Aorta (tissue), 5 donors: ENCODE measurements at regions of chr2 and their contacts with region 1.

Region 1: DNA sequence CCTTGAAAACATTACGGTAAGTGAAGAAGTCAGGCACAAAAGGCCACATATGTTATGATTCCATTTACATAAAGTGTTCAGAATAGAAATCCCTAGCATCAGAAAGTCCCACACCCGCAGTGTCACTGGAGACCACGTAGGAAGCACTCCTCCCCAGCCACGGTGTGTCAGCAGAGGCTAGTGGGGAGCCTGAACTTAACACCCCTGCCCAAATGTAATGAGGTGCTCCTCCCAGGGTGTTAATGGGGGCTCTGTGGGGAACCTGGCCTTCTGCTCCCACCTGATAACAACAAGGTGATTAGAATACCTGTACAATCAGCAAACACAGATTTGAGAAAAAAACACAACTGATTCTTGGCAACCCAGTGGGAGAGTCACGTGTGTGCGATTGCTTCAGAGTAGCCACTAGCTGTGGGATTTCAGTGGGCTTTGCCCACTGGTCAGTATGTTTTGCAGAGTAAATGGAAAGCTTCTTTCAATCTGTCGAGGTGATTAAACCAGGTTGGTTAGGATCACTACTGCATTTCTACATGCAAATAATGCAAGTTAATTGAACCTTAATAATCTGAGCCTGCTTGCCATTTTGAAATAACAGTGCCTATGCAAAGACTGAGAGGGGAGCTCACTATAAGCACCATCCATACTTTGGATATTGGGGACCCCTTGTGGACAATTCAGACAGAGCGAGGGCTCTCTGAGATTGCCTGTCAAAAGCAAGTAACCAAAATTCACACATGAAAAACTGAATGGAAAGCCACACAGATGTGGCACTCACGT is 20.6 kb upstream of the ATRAID start:
- DNase-seq: no peak
- ATAC-seq: peak; percentile 87
- H3K4me3 ChIP-seq: no peak overlapping the region
- H3K27ac ChIP-seq: no peak overlapping the region
- H3K4me1 ChIP-seq: no peaks in the 10 kb centered on the region
- H3K27me3 ChIP-seq: no peaks in the 10 kb centered on the region

Region 2: DNA sequence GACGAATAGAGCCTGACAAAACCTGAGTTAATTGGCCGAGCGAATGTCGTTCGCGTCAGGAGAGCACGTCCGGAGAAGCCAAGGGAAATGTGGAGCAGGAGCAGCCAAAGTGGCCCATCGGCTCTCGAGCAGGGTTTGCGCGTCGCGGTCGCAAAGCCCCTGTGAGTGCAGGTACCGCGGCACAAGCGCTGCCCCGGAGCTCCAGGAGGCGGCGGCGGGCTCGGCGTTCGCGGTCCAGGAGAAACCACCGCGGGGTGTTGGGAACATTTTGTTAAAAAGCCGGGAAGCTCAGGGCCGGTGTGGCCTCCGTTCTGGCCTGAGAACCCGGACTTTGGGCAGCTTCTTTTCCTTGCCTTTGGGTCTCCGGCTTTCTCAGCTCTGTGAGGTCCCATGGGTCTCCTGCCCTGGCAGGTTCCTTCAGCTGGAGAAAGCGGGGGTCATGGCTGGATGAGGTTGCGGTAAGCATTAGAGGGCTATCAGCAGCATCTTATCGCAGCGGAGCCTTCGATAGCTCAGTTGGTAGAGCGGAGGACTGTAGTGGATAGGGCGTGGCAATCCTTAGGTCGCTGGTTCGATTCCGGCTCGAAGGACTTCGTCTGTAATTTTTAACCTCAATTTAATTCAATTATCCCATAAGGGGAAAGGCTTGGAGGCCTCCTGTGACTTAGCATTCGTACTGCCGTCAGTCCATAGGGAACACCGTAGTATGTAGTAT is 140.8 kb before region 1 on chr2:
- intact Hi-C with region 1: no loop called
- DNase-seq: peak; percentile 87 to 95
- ATAC-seq: peak; percentile 94
- H3K4me3 ChIP-seq: peak overlapping the region; percentile 58 to 62
- H3K27ac ChIP-seq: peak overlapping the region in 1 of 2 donors; percentile 49
- H3K4me1 ChIP-seq: no peaks in the 10 kb centered on the region
- H3K27me3 ChIP-seq: no peaks in the 10 kb centered on the region

Region 3: DNA sequence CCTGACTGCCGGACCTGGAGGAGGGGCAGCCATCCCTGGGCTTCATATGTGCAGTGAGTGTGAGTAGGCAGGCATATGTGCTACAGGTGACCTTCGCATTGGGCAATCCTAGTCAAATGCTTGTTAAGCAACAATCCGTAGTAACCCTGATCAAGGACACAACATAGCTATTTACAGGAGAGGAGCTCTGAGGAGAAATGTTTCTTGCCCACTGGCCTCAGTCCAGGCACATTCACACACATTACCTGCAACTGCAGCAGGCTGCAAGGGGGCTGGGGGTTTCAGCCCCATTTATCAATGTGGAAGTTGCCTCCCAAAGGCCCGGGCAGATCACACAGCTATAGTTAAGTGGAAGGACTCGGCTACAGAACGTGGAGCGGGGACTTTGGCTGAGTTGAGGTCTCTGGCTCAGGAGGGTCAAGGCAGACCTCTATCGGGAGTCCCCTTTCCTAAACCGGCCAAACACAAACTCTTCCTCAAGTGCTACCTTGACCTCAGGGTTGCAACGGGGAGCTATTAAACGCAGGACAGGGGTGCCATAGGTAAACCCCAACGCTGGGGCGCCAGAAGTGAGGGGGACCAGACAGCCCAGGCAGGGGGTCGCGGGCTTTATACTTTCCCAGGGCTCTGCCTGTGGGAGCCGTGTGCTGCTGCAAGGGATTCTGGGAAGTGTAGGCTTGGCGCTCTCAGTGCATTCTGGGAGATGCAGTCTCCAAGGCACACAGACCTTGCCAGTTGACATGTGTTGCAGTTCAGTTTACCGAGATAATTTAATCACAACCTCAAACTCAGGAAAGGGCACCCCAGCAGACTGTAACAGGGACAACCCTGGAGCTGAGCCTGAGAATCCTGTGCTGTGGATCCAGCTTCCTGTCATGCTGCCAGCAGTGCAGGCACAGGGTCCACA is 95.2 kb before region 1 on chr2:
- intact Hi-C with region 1: loop called (anchors 5 to 10 kb)
- DNase-seq: peak; percentile 75 to 83
- ATAC-seq: peak; percentile 72
- H3K4me3 ChIP-seq: no peak overlapping the region
- H3K27ac ChIP-seq: no peak overlapping the region
- H3K4me1 ChIP-seq: no peaks in the 10 kb centered on the region
- H3K27me3 ChIP-seq: no peaks in the 10 kb centered on the region